ENCODE measurements at regions of chr9 and their contacts with region 1.

Region 1: GRCh38 chr9:78934880-78935279 is 636.9 kb upstream of the TLE4 start:
- DNase-seq: no peak
- ATAC-seq: no peak
- H3K4me3 ChIP-seq: no peak overlapping the region
- H3K27ac ChIP-seq: no peak overlapping the region
- H3K4me1 ChIP-seq: no peaks in the 10 kb centered on the region
- H3K27me3 ChIP-seq: no peaks in the 10 kb centered on the region
- CTCF ChIP-seq: no peak
- EP300 ChIP-seq: no peak
- POLR2A ChIP-seq: no peak
- RAD21 ChIP-seq: no peak

Region 2: DNA sequence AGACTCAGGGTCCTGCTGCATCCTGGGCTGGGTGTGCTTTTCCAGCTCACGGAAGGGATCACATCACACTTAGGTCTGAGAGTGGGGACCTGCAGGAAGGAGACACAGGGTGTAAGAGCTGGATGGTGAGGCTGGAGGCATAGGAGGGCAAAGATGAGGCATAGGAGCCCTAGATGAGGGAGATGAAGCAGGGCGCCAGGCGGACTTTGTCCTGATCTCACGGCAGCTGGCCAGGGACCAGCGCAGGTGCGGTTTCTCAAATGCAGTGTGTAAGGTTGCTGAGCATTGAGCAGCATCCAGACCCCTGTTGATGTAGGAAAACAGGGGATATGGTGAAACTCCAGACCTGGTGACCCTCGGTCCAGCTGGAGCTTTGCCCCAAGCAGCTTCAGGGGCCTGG is 481.4 kb before region 1 on chr9:
- CTCF ChIA-PET with region 1: no interaction called
- POLR2A ChIA-PET with region 1: no interaction called
- in situ Hi-C with region 1: no loop called
- intact Hi-C with region 1: no loop called
- DNase-seq: no peak
- ATAC-seq: peak; percentile 55; the same call in 2 of the 3 replicates
- H3K4me3 ChIP-seq: no peak overlapping the region
- H3K27ac ChIP-seq: no peak overlapping the region
- H3K4me1 ChIP-seq: no peaks in the 10 kb centered on the region
- H3K27me3 ChIP-seq: no peaks in the 10 kb centered on the region
- CTCF ChIP-seq: no peak
- EP300 ChIP-seq: no peak
- POLR2A ChIP-seq: no peak
- RAD21 ChIP-seq: no peak

Region 3: DNA sequence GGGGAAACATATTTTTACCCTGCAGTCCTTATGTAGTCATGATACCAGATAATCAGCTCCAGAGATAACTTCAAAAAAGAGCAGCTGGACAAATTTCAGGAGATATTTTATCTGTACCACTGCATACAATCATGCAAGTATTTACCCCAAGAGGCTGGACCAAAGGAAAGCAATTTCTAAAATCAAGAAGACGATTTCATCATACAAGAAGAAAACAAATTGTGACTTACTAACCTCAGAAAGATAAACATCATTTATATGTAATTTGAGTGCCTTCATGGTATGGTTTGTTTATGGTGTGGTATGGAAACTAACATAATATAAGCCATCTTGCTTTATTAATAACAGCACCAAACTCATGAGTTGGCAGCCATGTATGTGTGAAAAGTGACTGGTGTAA is 34.4 kb before region 1 on chr9:
- CTCF ChIA-PET with region 1: no interaction called
- POLR2A ChIA-PET with region 1: no interaction called
- in situ Hi-C with region 1: no loop called
- intact Hi-C with region 1: loop called (anchors 1 kb)
- DNase-seq: no peak
- ATAC-seq: no peak
- H3K4me3 ChIP-seq: no peak overlapping the region
- H3K27ac ChIP-seq: no peak overlapping the region
- H3K4me1 ChIP-seq: no peaks in the 10 kb centered on the region
- H3K27me3 ChIP-seq: no peaks in the 10 kb centered on the region
- CTCF ChIP-seq: no peak
- EP300 ChIP-seq: no peak
- POLR2A ChIP-seq: no peak
- RAD21 ChIP-seq: no peak